Caco-2 (cell line): ENCODE measurements at regions of chr5 and their contacts with region 1.

Region 1: DNA sequence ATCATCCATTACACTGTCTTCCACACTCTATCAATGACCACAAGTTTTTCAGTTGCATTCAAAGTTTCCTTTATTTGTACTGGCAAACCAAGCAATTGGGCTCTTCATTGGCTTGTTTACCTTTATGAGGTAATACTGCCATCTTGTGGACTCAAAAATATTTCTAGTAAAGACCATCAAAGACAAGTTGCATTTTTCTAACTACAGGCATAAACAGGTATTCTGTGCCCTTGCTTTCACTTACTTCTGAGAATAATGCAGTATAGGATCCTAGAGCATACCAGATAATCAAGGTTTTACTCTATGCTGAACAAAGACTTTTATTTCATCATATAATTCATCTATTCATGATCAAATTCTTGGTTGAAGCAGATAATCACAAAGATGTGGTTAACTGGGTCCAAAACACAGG is 173.7 kb upstream of the POU5F2 start:
- DNase-seq: peak in 1 of 2 experiments; percentile 51
- H3K4me3 ChIP-seq: no peak overlapping the region
- H3K4me3 Mint-ChIP-seq: no peak overlapping the region
- H3K27ac Mint-ChIP-seq: no peak overlapping the region
- H3K4me1 ChIP-seq: no peaks in the 10 kb centered on the region
- H3K4me1 Mint-ChIP-seq: no peaks in the 10 kb centered on the region
- H3K27me3 ChIP-seq: no peaks in the 10 kb centered on the region
- H3K27me3 Mint-ChIP-seq: no peaks in the 10 kb centered on the region
- CTCF ChIP-seq: peak; percentile 57 to 61

Region 2: DNA sequence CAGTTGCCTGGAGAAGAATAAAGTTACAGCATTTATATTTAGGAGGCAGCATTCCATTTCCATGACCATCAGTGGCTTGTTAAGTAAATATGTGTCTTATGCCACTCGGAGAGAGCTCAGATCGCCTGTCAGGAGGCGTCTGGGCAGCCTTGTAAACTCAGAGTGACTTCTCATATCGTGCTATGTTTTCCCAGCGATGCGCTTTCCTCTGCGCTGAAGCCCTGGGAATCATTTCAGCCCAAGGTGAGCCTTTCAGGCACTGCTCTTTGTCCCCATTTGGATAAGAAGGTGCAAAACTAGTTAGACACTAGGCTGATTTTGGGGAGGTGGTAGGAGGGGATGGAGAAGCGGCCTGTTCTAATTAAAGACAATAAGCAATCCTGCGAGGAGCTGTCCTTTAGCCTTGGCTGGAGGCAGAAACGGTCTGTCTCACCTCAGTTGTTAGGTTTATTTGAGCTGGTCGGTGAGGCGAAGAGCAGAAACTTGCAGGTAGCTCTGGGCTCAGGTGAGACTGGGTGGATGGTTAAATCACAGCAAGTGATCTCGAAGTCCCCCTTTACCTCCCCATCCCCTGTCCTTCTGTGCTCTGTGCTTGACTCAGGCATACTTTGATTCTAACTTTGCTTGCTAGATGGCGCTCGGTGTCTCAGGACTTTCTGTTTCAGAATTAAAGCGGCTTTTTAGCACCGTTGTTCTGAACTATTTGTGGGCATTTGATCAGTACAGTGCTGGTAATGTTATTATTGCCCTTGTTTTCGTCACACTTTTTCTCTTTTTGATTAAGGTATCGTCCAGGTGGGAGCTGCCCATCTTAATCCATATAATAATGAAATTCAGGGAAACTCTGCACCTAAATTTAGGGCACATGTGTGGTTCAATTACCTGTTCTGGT is 307.5 kb before region 1 on chr5:
- CTCF ChIA-PET with region 1: no interaction called
- POLR2A ChIA-PET with region 1: no interaction called
- intact Hi-C with region 1: loop called (anchors 2 kb)
- DNase-seq: peak in 1 of 2 experiments; percentile 45
- H3K4me3 ChIP-seq: no peak overlapping the region
- H3K4me3 Mint-ChIP-seq: no peak overlapping the region
- H3K27ac Mint-ChIP-seq: no peak overlapping the region
- H3K4me1 ChIP-seq: no peaks in the 10 kb centered on the region
- H3K4me1 Mint-ChIP-seq: peaks cover 3% of the 10 kb centered on the region
- H3K27me3 ChIP-seq: peaks cover 3% of the 10 kb centered on the region; the same call in 1 of the 2 replicates
- H3K27me3 Mint-ChIP-seq: peaks cover 26% of the 10 kb centered on the region
- CTCF ChIP-seq: peak; percentile 7 to 63

Region 3: DNA sequence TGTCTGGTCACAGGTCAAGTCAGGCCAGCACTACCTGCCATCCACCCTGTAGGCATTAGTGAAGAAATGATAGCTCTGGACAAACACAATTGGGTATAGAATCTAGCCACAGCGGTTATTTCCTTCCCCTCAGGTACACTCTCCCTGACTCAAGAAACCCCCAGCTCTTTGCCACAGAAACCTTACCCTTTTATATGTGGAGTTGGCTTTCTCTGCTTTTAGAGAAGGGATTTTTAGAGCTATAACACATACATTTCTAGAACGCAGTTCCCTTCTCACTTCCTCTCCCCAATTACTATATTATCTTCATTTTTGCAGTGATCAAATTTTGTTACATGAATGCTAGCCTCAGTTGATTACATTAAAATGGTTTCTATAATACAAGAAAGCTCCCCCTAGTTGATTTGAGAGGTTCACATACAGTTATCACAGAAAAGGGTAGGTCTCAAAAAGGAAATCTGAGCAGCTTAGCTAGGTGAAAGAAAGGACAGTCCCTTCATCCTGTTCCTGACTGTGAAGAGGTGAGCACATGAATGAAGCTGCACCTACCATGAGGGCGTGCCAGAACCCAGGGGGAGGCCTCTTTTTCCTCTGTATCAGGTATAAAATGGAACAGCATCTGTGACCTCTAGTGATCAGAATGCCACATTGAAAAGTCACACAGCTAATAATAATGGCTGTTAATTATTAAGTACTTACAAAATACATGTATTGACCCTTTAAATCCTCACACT is 277.7 kb after region 1 on chr5:
- CTCF ChIA-PET with region 1: interaction called, 3 read pairs
- POLR2A ChIA-PET with region 1: no interaction called
- intact Hi-C with region 1: loop called (anchors 10 kb)
- DNase-seq: peak in 1 of 2 experiments; percentile 21
- H3K4me3 ChIP-seq: no peak overlapping the region
- H3K4me3 Mint-ChIP-seq: no peak overlapping the region
- H3K27ac Mint-ChIP-seq: no peak overlapping the region
- H3K4me1 ChIP-seq: 0 out of 2 replicates have a peak, but pooled peaks cover 3% of the 10 kb centered on the region
- H3K4me1 Mint-ChIP-seq: peaks cover 8% of the 10 kb centered on the region
- H3K27me3 ChIP-seq: no peaks in the 10 kb centered on the region
- H3K27me3 Mint-ChIP-seq: no peaks in the 10 kb centered on the region
- CTCF ChIP-seq: no peak